Colonic mucosa (tissue), 4 donors: ENCODE measurements at regions of chr7 and their contacts with region 1.

Region 1: GRCh38 chr7:4641667-4642467 is 40.2 kb upstream of the FOXK1 start:
- DNase-seq: peak; percentile 92
- H3K4me3 ChIP-seq: peak overlapping the region; percentile 60
- H3K27ac ChIP-seq: peak overlapping the region; percentile 77
- H3K4me1 ChIP-seq: no peaks in the 10 kb centered on the region
- H3K27me3 ChIP-seq: no peaks in the 10 kb centered on the region
- CTCF ChIP-seq: no peak

Region 2: GRCh38 chr7:4753711-4754432 is 112.0 kb after region 1 on chr7:
- intact Hi-C with region 1: loop called (anchors 5 kb)
- DNase-seq: peak; percentile 90
- H3K4me3 ChIP-seq: no peak overlapping the region
- H3K27ac ChIP-seq: no peak overlapping the region
- H3K4me1 ChIP-seq: no peaks in the 10 kb centered on the region
- H3K27me3 ChIP-seq: no peaks in the 10 kb centered on the region
- CTCF ChIP-seq: peak; percentile 86

Region 3: GRCh38 chr7:4883374-4884144 is 241.7 kb after region 1 on chr7 and contains the start of gene RADIL:
- intact Hi-C with region 1: no loop called
- DNase-seq: peak; percentile 91
- H3K4me3 ChIP-seq: peak within 1 kb of the TSS; percentile 39
- H3K27ac ChIP-seq: peak within 1 kb of the TSS; percentile 2
- H3K4me1 ChIP-seq: peaks cover 3% of the 10 kb centered on the region
- H3K27me3 ChIP-seq: peaks cover 8% of the 10 kb centered on the region
- CTCF ChIP-seq: peak; percentile 57
- total RNA-seq, gene RADIL: 0.54 to 1.9 TPM